ENCODE measurements at regions of chr12 and their contacts with region 1.

Region 1: DNA sequence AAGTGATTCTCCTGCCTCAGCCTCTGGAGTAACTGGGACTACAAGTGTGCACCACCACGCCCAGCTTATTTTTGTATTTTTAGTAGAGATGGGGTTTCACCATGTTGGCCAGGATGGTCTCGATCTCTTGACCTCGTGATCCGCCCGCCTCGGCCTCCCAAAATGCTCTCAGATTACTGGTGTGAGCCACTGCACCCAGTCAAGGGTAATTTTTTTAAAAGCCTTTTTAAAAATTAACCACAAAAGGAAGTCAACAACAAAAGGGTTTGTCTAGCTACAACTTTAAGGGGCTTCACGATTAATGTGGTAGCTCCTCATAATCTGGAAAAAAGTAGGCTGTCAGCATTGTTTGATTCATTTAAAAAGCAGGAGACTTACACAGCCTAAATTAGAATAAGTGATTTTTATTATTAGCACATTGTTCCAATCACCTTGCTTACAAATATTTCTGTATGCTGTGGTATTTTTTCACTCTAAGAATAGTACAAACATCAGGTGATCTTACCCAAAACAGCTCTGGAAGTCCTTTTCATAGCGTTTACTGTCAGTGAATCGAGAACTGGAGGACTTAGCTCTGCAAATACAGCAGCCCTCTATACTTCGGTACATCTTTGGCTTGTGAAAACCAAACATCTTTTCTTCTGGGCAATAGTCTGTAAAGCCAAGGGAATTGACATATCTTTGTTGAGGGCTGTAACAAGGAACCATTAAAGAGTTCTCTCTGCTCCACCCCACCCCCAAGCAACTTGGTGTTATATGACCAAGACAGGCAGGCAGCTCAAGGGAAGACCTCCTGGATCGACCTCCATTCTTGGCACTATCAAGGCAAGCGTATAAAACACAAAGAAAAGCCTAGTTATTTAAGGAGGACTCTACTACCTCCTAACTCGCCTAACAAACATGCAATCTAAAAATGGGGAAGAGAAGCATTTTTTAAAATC is 28.1 kb downstream of the SINHCAF start:
- DNase-seq: no peak
- ATAC-seq: no peak
- H3K4me3 ChIP-seq: no peak overlapping the region
- H3K4me3 Mint-ChIP-seq: no peak overlapping the region
- H3K27ac ChIP-seq: no peak overlapping the region
- H3K27ac Mint-ChIP-seq: peak overlapping the region; percentile 82
- H3K4me1 ChIP-seq: peaks cover 9% of the 10 kb centered on the region
- H3K4me1 Mint-ChIP-seq: peaks cover 34% of the 10 kb centered on the region
- H3K27me3 ChIP-seq: no peaks in the 10 kb centered on the region
- H3K27me3 Mint-ChIP-seq: no peaks in the 10 kb centered on the region
- CTCF ChIP-seq: no peak

Region 2: GRCh38 chr12:31228811-31229792 is 68.7 kb before region 1 on chr12:
- CTCF ChIA-PET with region 1: no interaction called
- POLR2A ChIA-PET with region 1: no interaction called
- intact Hi-C with region 1: no loop called
- DNase-seq: no peak
- ATAC-seq: no peak
- H3K4me3 ChIP-seq: no peak overlapping the region
- H3K4me3 Mint-ChIP-seq: no peak overlapping the region
- H3K27ac ChIP-seq: no peak overlapping the region
- H3K27ac Mint-ChIP-seq: no peak overlapping the region
- H3K4me1 ChIP-seq: no peaks in the 10 kb centered on the region
- H3K4me1 Mint-ChIP-seq: no peaks in the 10 kb centered on the region
- H3K27me3 ChIP-seq: no peaks in the 10 kb centered on the region
- H3K27me3 Mint-ChIP-seq: peaks cover 5% of the 10 kb centered on the region
- CTCF ChIP-seq: no peak

Region 3: GRCh38 chr12:31265722-31266121 is 32.1 kb before region 1 on chr12:
- CTCF ChIA-PET with region 1: no interaction called
- POLR2A ChIA-PET with region 1: no interaction called
- intact Hi-C with region 1: no loop called
- DNase-seq: no peak
- ATAC-seq: no peak
- H3K4me3 ChIP-seq: no peak overlapping the region
- H3K4me3 Mint-ChIP-seq: no peak overlapping the region
- H3K27ac ChIP-seq: no peak overlapping the region
- H3K27ac Mint-ChIP-seq: no peak overlapping the region
- H3K4me1 ChIP-seq: no peaks in the 10 kb centered on the region
- H3K4me1 Mint-ChIP-seq: no peaks in the 10 kb centered on the region
- H3K27me3 ChIP-seq: no peaks in the 10 kb centered on the region
- H3K27me3 Mint-ChIP-seq: no peaks in the 10 kb centered on the region
- CTCF ChIP-seq: no peak

Region 4: DNA sequence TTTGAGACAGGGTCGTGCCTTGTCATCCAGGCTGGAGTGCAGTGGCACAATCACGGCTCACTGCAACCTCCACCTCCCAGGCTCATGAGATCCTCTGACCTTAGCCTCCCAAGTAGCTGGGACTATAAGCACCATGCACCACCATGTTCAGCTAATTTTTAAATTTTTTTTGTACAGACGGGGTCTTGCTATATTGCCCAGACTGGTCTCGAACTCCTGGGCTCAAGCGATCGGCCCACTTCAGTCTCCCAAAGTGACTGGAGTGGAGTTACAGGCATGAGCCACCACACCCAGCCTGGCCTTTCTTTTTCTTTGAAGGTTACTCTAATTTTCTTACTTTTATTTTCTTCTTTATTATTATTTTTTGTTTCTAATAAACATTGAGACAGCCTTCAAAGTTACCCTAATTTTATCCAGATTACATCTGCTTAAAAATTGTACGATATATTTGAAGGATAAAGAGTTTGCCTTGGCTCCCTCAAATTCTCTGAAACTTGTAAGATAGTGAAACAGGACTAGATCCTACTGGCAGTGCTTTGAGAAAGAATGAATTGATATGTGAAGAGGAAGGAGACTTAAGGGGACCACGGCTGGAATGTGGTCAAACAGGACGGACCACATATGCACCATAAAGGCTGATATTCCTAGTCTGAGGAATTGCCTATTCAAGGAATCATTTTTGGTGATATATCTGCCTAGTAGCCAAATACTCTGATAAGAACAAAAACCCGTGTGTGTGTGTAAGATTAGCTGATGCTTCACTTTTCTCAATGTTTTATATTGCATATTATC is 42.2 kb after region 1 on chr12:
- CTCF ChIA-PET with region 1: no interaction called
- POLR2A ChIA-PET with region 1: no interaction called
- intact Hi-C with region 1: loop called in 1 of 2 experiments (anchors 10 kb)
- DNase-seq: no peak
- ATAC-seq: no peak
- H3K4me3 ChIP-seq: no peak overlapping the region
- H3K4me3 Mint-ChIP-seq: no peak overlapping the region
- H3K27ac ChIP-seq: no peak overlapping the region
- H3K27ac Mint-ChIP-seq: no peak overlapping the region
- H3K4me1 ChIP-seq: no peaks in the 10 kb centered on the region
- H3K4me1 Mint-ChIP-seq: no peaks in the 10 kb centered on the region
- H3K27me3 ChIP-seq: no peaks in the 10 kb centered on the region
- H3K27me3 Mint-ChIP-seq: no peaks in the 10 kb centered on the region
- CTCF ChIP-seq: no peak